ENCODE measurements at regions of chr1 and their contacts with region 1.

Region 1: GRCh38 chr1:64675718-64676345 is 69.0 kb upstream of the RAVER2 start:
- DNase-seq: peak; percentile 32
- H3K4me3 Mint-ChIP-seq: no peak overlapping the region
- H3K27ac Mint-ChIP-seq: no peak overlapping the region
- H3K4me1 Mint-ChIP-seq: no peaks in the 10 kb centered on the region
- H3K27me3 Mint-ChIP-seq: no peaks in the 10 kb centered on the region
- CTCF ChIP-seq: peak; percentile 54

Region 2: GRCh38 chr1:64469977-64470664 is 205.7 kb before region 1 on chr1 and contains the start of gene CACHD1:
- CTCF ChIA-PET with region 1: interaction called, 7 read pairs
- POLR2A ChIA-PET with region 1: no interaction called
- intact Hi-C with region 1: loop called (anchors 1 kb)
- DNase-seq: peak; percentile 76
- H3K4me3 Mint-ChIP-seq: peak within 1 kb of the TSS; percentile 83
- H3K27ac Mint-ChIP-seq: peak within 1 kb of the TSS; percentile 37
- H3K4me1 Mint-ChIP-seq: peaks cover 28% of the 10 kb centered on the region
- H3K27me3 Mint-ChIP-seq: peaks cover 8% of the 10 kb centered on the region
- CTCF ChIP-seq: peak; percentile 24
- total RNA-seq, gene CACHD1: 2.9 and 3.9 TPM in 2 replicates

Region 3: DNA sequence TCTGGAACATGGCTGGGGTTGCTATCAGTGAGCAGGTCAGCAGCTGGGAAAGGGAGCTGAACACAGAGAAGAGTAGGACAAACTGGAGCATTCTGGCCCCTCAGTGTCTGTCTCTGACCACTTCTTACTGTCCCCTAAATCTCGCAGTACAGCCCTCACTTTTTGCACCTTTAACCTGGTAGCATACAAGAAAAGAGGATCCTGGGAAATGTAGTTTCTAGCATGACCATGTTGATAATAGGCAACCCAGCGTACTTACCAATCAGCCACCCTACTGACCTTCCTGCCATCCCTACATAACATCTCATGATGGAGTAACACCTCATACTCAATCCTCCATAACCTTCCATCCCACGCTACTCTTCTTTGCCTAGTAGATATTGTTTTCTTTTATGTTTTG is 30.1 kb before region 1 on chr1:
- CTCF ChIA-PET with region 1: interaction called, 12 read pairs
- POLR2A ChIA-PET with region 1: no interaction called
- intact Hi-C with region 1: no loop called
- DNase-seq: no peak
- H3K4me3 Mint-ChIP-seq: no peak overlapping the region
- H3K27ac Mint-ChIP-seq: no peak overlapping the region
- H3K4me1 Mint-ChIP-seq: no peaks in the 10 kb centered on the region
- H3K27me3 Mint-ChIP-seq: no peaks in the 10 kb centered on the region
- CTCF ChIP-seq: no peak

Region 4: DNA sequence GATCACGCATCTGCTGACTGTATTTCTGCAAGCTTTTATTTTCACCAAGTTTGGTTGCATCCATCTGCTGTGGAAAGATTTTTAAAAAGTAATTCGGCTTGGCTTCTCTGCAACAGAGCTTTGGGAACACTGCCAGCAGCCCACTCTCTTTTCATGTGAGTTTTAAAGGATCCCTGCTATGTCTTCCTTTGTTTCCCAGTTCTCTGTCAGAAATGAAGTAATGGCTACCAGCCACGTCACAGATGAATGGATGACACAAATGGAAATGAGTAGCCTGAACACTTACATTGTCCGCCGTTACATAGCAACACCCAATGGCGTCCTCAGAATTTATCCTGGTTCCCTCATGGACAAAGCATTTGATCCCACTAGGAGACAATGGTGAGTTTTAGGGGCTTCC is 11.5 kb before region 1 on chr1:
- CTCF ChIA-PET with region 1: interaction called, 17 read pairs
- POLR2A ChIA-PET with region 1: no interaction called
- intact Hi-C with region 1: no loop called
- DNase-seq: no peak
- H3K4me3 Mint-ChIP-seq: no peak overlapping the region
- H3K27ac Mint-ChIP-seq: no peak overlapping the region
- H3K4me1 Mint-ChIP-seq: no peaks in the 10 kb centered on the region
- H3K27me3 Mint-ChIP-seq: no peaks in the 10 kb centered on the region
- CTCF ChIP-seq: no peak

Region 5: DNA sequence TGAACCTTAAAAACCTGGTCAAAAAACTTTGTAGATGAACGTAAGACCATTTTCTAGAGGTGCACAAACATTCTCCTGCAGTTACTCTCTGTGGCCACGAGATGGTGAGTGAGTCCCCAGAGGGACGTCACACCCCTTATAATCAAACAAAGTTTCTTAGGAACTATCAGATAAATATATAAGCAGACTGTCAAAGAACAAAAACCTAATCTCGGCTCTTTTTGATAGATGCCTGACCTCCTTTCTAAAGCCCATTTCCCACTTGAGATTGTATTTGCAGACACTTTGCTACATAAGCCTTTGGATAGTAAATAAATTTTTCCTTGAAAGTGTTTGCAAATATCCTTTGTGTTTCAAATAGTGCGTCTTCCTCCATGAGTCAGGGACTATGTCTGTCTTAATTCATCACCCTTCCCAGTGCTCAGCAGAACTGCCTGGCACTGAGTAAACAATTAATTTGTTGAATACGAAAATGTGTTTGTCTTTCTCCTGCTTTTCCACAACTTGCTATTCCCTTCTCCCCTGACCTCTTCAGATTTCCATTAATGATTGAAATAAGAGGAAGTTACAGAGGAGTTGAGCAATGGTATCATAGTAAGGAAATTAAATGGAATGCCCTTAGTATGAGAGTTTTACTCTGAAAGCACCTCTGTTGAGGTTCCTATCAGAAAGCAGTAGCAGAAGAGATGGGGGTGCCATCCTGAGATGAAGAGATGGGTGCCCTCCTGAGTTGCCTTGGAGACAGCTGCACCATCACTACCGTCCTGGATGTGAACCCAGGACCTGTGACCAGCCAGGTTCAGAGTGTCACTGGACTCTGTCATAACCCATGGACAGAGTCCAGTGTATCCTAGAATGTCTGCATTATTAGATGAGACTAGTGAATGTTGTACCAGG is 11.2 kb after region 1 on chr1:
- CTCF ChIA-PET with region 1: interaction called, 36 read pairs
- POLR2A ChIA-PET with region 1: no interaction called
- intact Hi-C with region 1: no loop called
- DNase-seq: peak; percentile 71
- H3K4me3 Mint-ChIP-seq: no peak overlapping the region
- H3K27ac Mint-ChIP-seq: no peak overlapping the region
- H3K4me1 Mint-ChIP-seq: peaks cover 19% of the 10 kb centered on the region
- H3K27me3 Mint-ChIP-seq: no peaks in the 10 kb centered on the region
- CTCF ChIP-seq: peak; percentile 57

Region 6: GRCh38 chr1:64850846-64851245 is 175.0 kb after region 1 on chr1:
- CTCF ChIA-PET with region 1: no interaction called
- POLR2A ChIA-PET with region 1: no interaction called
- intact Hi-C with region 1: no loop called
- DNase-seq: no peak
- H3K4me3 Mint-ChIP-seq: no peak overlapping the region
- H3K27ac Mint-ChIP-seq: no peak overlapping the region
- H3K4me1 Mint-ChIP-seq: no peaks in the 10 kb centered on the region
- H3K27me3 Mint-ChIP-seq: no peaks in the 10 kb centered on the region
- CTCF ChIP-seq: no peak

Region 7: DNA sequence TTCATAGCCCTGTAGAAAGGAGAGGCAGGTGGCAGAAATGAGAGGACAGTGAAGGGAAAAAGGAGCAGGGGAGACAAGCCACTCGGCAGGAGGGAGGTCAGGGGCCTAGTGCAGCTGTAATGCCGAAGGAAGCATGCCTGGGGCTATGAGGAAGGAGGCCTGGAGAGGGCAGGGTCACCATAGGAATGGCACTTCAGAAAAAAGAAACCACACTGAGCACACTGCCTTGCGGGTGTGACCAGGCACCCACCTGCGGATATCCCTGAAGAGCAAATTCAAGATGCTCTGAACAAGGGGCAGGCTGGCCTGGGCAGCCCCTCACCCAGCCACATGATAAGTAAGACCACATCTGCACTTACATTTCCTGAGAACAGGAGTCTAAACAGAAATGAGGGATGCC is 185.8 kb after region 1 on chr1:
- CTCF ChIA-PET with region 1: no interaction called
- POLR2A ChIA-PET with region 1: no interaction called
- intact Hi-C with region 1: no loop called
- DNase-seq: peak; percentile 20
- H3K4me3 Mint-ChIP-seq: no peak overlapping the region
- H3K27ac Mint-ChIP-seq: peak overlapping the region; percentile 26
- H3K4me1 Mint-ChIP-seq: peaks cover 3% of the 10 kb centered on the region
- H3K27me3 Mint-ChIP-seq: no peaks in the 10 kb centered on the region
- CTCF ChIP-seq: no peak

Region 8: GRCh38 chr1:64966158-64966971 is 290.5 kb after region 1 on chr1 and contains the start of gene JAK1:
- CTCF ChIA-PET with region 1: no interaction called
- POLR2A ChIA-PET with region 1: no interaction called
- intact Hi-C with region 1: no loop called
- DNase-seq: peak; percentile 73
- H3K4me3 Mint-ChIP-seq: peak within 1 kb of the TSS; percentile 82
- H3K27ac Mint-ChIP-seq: peak within 1 kb of the TSS; percentile 86
- H3K4me1 Mint-ChIP-seq: peaks cover 29% of the 10 kb centered on the region
- H3K27me3 Mint-ChIP-seq: no peaks in the 10 kb centered on the region
- CTCF ChIP-seq: no peak
- total RNA-seq, gene JAK1: 73.1 and 80.0 TPM in 2 replicates